ENCODE measurements at regions of chr5 and their contacts with region 1.

Region 1: GRCh38 chr5:69234457-69235268 is at the start of gene CDK7:
- DNase-seq: peak; percentile 88 to 96
- ATAC-seq: peak; percentile 99 to 100 (median 99)
- H3K4me3 ChIP-seq: peak within 1 kb of the TSS; percentile 79
- H3K4me3 Mint-ChIP-seq: peak within 1 kb of the TSS; percentile 93
- H3K27ac ChIP-seq: peak within 1 kb of the TSS; percentile 70
- H3K27ac Mint-ChIP-seq: peak within 1 kb of the TSS; percentile 84 to 92
- H3K4me1 ChIP-seq: peaks cover 12% of the 10 kb centered on the region
- H3K4me1 Mint-ChIP-seq: peaks cover 37 to 40% of the 10 kb centered on the region in 2 donors
- H3K27me3 ChIP-seq: no peaks in the 10 kb centered on the region
- H3K27me3 Mint-ChIP-seq: no peaks in the 10 kb centered on the region
- CTCF ChIP-seq: no peak
- total RNA-seq, gene CDK7: 30.6 to 39.5 (median 30.8) TPM

Region 2: DNA sequence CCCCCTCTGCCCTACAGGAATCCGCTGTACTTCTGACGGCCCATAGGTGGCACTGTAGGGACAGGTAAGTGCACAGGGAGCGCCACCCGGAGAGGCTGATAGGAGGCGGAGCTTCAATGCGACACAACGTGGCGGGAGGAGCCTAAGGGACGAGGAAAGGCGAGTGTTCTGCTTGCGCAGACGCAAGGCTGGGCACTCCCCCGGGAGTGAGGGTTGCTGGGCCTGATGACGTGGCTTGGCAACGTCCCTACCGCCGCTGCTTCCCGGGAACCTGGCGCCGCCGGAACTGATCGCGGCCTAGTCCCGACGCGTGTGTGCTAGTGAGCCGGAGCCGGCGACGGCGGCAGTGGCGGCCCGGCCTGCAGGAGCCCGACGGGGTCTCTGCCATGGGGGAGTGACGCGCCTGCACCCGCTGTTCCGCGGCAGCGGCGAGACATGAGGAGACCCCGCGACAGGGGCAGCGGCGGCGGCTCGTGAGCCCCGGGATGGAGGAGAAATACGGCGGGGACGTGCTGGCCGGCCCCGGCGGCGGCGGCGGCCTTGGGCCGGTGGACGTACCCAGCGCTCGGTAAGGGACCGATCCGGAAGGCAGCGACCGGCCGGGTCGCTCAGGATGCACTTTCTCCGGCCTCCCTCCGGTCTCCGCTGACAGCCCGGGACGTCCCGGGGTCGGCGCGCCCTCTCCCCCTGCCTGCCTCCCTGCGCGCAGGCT is 140.7 kb before region 1 on chr5 and contains the start of gene SLC30A5:
- intact Hi-C with region 1: loop called (anchors 1 kb)
- DNase-seq: peak; percentile 94 to 100
- ATAC-seq: peak; percentile 97 to 100 (median 98)
- H3K4me3 ChIP-seq: peak within 1 kb of the TSS; percentile 48
- H3K4me3 Mint-ChIP-seq: peak within 1 kb of the TSS; percentile 95
- H3K27ac ChIP-seq: peak within 1 kb of the TSS; percentile 79
- H3K27ac Mint-ChIP-seq: peak within 1 kb of the TSS; percentile 94 to 99
- H3K4me1 ChIP-seq: peaks cover 15% of the 10 kb centered on the region
- H3K4me1 Mint-ChIP-seq: peaks cover 17 to 30% of the 10 kb centered on the region in 2 donors
- H3K27me3 ChIP-seq: no peaks in the 10 kb centered on the region
- H3K27me3 Mint-ChIP-seq: no peaks in the 10 kb centered on the region
- CTCF ChIP-seq: peak; percentile 79
- total RNA-seq, gene SLC30A5: 17.8 to 30.1 (median 26.7) TPM

Region 3: DNA sequence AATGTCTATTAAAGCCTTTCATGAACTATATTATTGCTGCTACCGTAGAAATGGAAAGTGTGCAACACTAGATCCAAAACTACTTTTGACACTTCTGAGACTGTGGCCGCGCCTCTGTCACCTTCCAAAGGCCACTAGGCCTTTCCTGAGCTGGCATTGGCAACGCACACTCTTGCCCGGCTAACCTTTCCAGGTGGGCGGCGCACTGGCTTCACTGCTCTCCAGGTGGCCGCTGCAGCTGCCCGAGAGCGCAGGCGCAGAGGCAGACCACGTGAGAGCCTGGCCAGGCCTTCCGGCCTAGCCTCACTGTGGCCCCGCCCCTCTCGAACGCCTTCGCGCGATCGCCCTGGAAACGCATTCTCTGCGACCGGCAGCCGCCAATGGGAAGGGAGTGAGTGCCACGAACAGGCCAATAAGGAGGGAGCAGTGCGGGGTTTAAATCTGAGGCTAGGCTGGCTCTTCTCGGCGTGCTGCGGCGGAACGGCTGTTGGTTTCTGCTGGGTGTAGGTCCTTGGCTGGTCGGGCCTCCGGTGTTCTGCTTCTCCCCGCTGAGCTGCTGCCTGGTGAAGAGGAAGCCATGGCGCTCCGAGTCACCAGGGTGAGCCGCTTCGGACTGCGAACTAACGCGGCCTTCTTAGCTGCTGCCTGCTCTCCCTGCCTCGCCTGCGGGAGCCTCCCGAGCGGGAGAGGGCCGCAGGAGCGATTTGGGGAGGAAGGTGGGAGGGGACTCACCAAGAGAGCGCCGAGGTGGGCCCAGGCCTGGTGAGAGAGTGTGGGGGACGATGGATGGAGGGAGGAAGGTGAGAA is 67.8 kb before region 1 on chr5 and contains the start of gene CCNB1:
- intact Hi-C with region 1: no loop called
- DNase-seq: peak; percentile 96 to 98
- ATAC-seq: peak; percentile 99 to 100 (median 100)
- H3K4me3 ChIP-seq: peak within 1 kb of the TSS; percentile 68
- H3K4me3 Mint-ChIP-seq: peak within 1 kb of the TSS; percentile 93
- H3K27ac ChIP-seq: peak within 1 kb of the TSS; percentile 56
- H3K27ac Mint-ChIP-seq: peak within 1 kb of the TSS; percentile 90 to 93
- H3K4me1 ChIP-seq: peaks cover 16% of the 10 kb centered on the region
- H3K4me1 Mint-ChIP-seq: peaks cover 24% of the 10 kb centered on the region in 2 donors
- H3K27me3 ChIP-seq: no peaks in the 10 kb centered on the region
- H3K27me3 Mint-ChIP-seq: no peaks in the 10 kb centered on the region
- CTCF ChIP-seq: no peak
- total RNA-seq, gene CCNB1: 2.8 to 5.2 (median 4.0) TPM

Region 4: GRCh38 chr5:69189162-69190086 is 45.2 kb before region 1 on chr5 and contains the start of gene CENPH:
- intact Hi-C with region 1: loop called (anchors 1 kb)
- DNase-seq: peak; percentile 85 to 94
- ATAC-seq: peak; percentile 95 to 98 (median 97)
- H3K4me3 ChIP-seq: peak within 1 kb of the TSS; percentile 72
- H3K4me3 Mint-ChIP-seq: peak within 1 kb of the TSS; percentile 89
- H3K27ac ChIP-seq: peak within 1 kb of the TSS; percentile 65
- H3K27ac Mint-ChIP-seq: peak within 1 kb of the TSS; percentile 86 to 94
- H3K4me1 ChIP-seq: peaks cover 13% of the 10 kb centered on the region
- H3K4me1 Mint-ChIP-seq: peaks cover 10 to 14% of the 10 kb centered on the region in 2 donors
- H3K27me3 ChIP-seq: no peaks in the 10 kb centered on the region
- H3K27me3 Mint-ChIP-seq: no peaks in the 10 kb centered on the region
- CTCF ChIP-seq: no peak
- total RNA-seq, gene CENPH: 5.6 to 6.4 (median 5.6) TPM

Region 5: GRCh38 chr5:69217548-69218526 is 16.8 kb before region 1 on chr5:
- intact Hi-C with region 1: loop called (anchors 1 kb)
- DNase-seq: peak; percentile 92 to 97
- ATAC-seq: peak; percentile 91 to 99 (median 92)
- H3K4me3 ChIP-seq: peak overlapping the region; percentile 87
- H3K4me3 Mint-ChIP-seq: peak overlapping the region; percentile 100
- H3K27ac ChIP-seq: peak overlapping the region; percentile 83
- H3K27ac Mint-ChIP-seq: peak overlapping the region; percentile 98 to 99
- H3K4me1 ChIP-seq: peaks cover 4% of the 10 kb centered on the region
- H3K4me1 Mint-ChIP-seq: peaks cover 13 to 23% of the 10 kb centered on the region in 2 donors
- H3K27me3 ChIP-seq: no peaks in the 10 kb centered on the region
- H3K27me3 Mint-ChIP-seq: no peaks in the 10 kb centered on the region
- CTCF ChIP-seq: no peak

Region 6: DNA sequence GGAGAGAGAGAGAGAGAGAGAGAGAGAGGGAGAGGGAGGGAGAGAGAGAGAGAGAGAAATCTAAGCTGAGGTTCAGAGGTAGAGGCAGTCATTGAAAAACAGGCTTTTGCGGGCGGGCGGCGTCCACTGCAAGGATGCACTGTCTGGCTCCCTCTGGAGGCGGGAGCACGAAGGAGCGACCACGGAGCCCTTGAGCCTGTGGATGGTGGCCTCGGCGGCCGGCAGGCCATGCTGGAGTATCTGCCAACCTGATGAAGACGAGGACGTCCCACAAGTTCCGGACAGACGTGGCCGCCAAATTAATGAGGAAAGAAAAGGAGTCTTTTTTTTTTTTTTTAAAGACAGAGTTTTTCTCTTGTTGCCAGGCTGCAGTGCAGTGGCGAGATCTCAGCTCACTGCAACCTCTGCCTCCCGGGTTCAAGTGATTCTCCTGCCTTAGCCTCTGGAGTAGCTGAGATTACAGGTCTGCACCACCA is 100.2 kb after region 1 on chr5:
- intact Hi-C with region 1: loop called (anchors 2 kb)
- DNase-seq: peak; percentile 48 to 86
- ATAC-seq: peak; percentile 73 to 81 (median 74)
- H3K4me3 ChIP-seq: no peak overlapping the region
- H3K4me3 Mint-ChIP-seq: peak overlapping the region; percentile 80
- H3K27ac ChIP-seq: no peak overlapping the region
- H3K27ac Mint-ChIP-seq: peak overlapping the region; percentile 53 to 62
- H3K4me1 ChIP-seq: peaks cover 12% of the 10 kb centered on the region
- H3K4me1 Mint-ChIP-seq: peaks cover 10 to 19% of the 10 kb centered on the region in 2 donors
- H3K27me3 ChIP-seq: no peaks in the 10 kb centered on the region
- H3K27me3 Mint-ChIP-seq: no peaks in the 10 kb centered on the region
- CTCF ChIP-seq: peak; percentile 42

Region 7: GRCh38 chr5:69369369-69370121 is 134.9 kb after region 1 on chr5 and contains the starts of genes AK6, RAD17 and TAF9:
- intact Hi-C with region 1: loop called (anchors 2 kb)
- DNase-seq: peak; percentile 90 to 96
- ATAC-seq: peak; percentile 91 to 98 (median 91)
- H3K4me3 ChIP-seq: peak within 1 kb of the TSS; percentile 97
- H3K4me3 Mint-ChIP-seq: peak within 1 kb of the TSS; percentile 93
- H3K27ac ChIP-seq: peak within 1 kb of the TSS; percentile 98
- H3K27ac Mint-ChIP-seq: peak within 1 kb of the TSS; percentile 95 to 96
- H3K4me1 ChIP-seq: peaks cover 20% of the 10 kb centered on the region
- H3K4me1 Mint-ChIP-seq: peaks cover 27% of the 10 kb centered on the region in 2 donors
- H3K27me3 ChIP-seq: no peaks in the 10 kb centered on the region
- H3K27me3 Mint-ChIP-seq: no peaks in the 10 kb centered on the region
- CTCF ChIP-seq: no peak
- total RNA-seq, gene AK6: 5.8 to 10.8 (median 9.7) TPM
- total RNA-seq, gene RAD17: 24.4 to 34.3 (median 24.6) TPM
- total RNA-seq, gene TAF9: 38.3 to 53.8 (median 46.6) TPM